ENCODE measurements at regions of chr3 and their contacts with region 1.

Region 1: DNA sequence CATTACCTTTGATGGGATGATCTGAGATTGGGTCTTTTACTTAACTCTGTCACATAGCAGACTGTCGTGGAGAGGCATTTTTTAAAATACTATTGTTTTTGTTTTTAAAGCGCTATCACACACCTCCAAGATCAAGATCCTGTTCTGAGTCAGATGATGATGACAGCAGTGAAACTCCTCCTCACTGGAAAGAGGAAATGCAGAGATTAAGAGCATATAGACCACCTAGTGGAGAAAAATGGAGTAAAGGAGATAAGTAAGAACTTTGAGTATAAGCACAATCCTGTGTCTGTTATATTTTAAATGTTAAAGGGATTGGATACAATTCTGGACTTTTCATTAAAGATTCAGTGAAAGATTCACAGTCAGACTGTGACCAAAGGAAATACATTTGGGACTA is 18.4 kb upstream of the ZBTB47 start:
- DNase-seq: no peak
- ATAC-seq: peak; percentile 68
- H3K4me3 Mint-ChIP-seq: no peak overlapping the region
- H3K27ac Mint-ChIP-seq: no peak overlapping the region
- H3K4me1 Mint-ChIP-seq: peaks cover 5% of the 10 kb centered on the region
- H3K27me3 Mint-ChIP-seq: no peaks in the 10 kb centered on the region
- CTCF ChIP-seq: no peak

Region 2: DNA sequence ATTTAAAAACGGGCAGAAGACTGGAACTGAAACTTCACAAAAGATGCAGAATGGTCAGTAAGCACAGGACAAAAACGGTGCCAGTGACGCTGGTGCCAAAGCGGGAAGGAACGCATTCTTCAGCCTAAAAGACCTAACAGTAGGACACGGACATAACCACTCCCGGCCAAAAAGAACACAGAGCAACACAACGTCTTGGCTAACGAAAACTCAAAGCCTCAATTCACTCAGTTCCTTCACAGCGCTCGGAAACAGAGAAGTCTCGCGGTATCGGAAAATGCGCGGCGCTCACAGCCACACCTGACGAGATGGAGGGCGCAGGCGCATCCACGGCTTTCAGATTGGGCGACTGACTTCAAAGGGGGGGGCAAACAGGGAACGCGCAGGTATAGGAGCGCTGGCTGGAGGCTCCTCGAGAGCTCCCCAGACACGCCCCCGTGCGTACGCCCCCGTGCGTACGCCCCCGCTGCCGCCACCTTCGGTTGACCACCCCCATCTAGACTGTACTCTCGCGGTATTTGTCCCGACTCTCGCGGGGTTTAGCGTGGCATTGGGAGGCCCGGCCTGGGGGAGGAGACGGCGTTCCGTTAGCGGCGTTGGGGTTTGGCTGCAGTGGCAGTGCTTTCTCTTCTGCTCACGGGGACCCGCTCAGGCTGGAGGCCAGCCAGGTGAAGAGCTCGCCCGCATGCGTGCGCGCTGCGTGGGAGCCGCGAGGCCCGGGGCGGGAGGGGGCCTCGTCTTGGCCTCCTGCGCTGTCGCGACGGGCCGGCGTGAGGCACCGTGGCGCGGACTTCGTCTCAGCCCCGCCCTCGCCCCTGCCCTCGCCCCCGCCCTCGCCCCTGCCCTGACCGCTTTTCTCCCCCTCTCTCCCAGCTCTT is 34.8 kb before region 1 on chr3 and contains the start of gene NKTR:
- CTCF ChIA-PET with region 1: interaction called, 18 read pairs
- POLR2A ChIA-PET with region 1: interaction called, 18 read pairs
- intact Hi-C with region 1: loop called (anchors 5 kb)
- DNase-seq: peak; percentile 99
- ATAC-seq: peak; percentile 88
- H3K4me3 Mint-ChIP-seq: peak within 1 kb of the TSS; percentile 88
- H3K27ac Mint-ChIP-seq: peak within 1 kb of the TSS; percentile 99
- H3K4me1 Mint-ChIP-seq: peaks cover 28% of the 10 kb centered on the region
- H3K27me3 Mint-ChIP-seq: no peaks in the 10 kb centered on the region
- CTCF ChIP-seq: no peak
- total RNA-seq, gene NKTR: 63.4 to 65.9 TPM

Region 3: GRCh38 chr3:42613462-42613861 is 21.6 kb before region 1 on chr3:
- CTCF ChIA-PET with region 1: interaction called, 10 read pairs
- POLR2A ChIA-PET with region 1: interaction called, 3 read pairs
- intact Hi-C with region 1: no loop called
- DNase-seq: no peak
- ATAC-seq: no peak
- H3K4me3 Mint-ChIP-seq: no peak overlapping the region
- H3K27ac Mint-ChIP-seq: peak overlapping the region; percentile 8
- H3K4me1 Mint-ChIP-seq: peaks cover 55% of the 10 kb centered on the region
- H3K27me3 Mint-ChIP-seq: no peaks in the 10 kb centered on the region
- CTCF ChIP-seq: peak; percentile 30

Region 4: GRCh38 chr3:42660893-42661292 is 25.8 kb after region 1 on chr3:
- CTCF ChIA-PET with region 1: no interaction called
- POLR2A ChIA-PET with region 1: no interaction called
- intact Hi-C with region 1: no loop called
- DNase-seq: peak; percentile 34
- ATAC-seq: peak; percentile 60
- H3K4me3 Mint-ChIP-seq: no peak overlapping the region
- H3K27ac Mint-ChIP-seq: no peak overlapping the region
- H3K4me1 Mint-ChIP-seq: no peaks in the 10 kb centered on the region
- H3K27me3 Mint-ChIP-seq: no peaks in the 10 kb centered on the region
- CTCF ChIP-seq: peak; percentile 21

Region 5: GRCh38 chr3:42685891-42686820 is 51.0 kb after region 1 on chr3:
- CTCF ChIA-PET with region 1: no interaction called
- POLR2A ChIA-PET with region 1: no interaction called
- intact Hi-C with region 1: no loop called
- DNase-seq: no peak
- ATAC-seq: no peak
- H3K4me3 Mint-ChIP-seq: no peak overlapping the region
- H3K27ac Mint-ChIP-seq: no peak overlapping the region
- H3K4me1 Mint-ChIP-seq: no peaks in the 10 kb centered on the region
- H3K27me3 Mint-ChIP-seq: peaks cover 9% of the 10 kb centered on the region
- CTCF ChIP-seq: no peak

Region 6: GRCh38 chr3:42698911-42699230 is 63.8 kb after region 1 on chr3:
- CTCF ChIA-PET with region 1: no interaction called
- POLR2A ChIA-PET with region 1: no interaction called
- intact Hi-C with region 1: no loop called
- DNase-seq: peak; percentile 54
- ATAC-seq: peak; percentile 56
- H3K4me3 Mint-ChIP-seq: no peak overlapping the region
- H3K27ac Mint-ChIP-seq: no peak overlapping the region
- H3K4me1 Mint-ChIP-seq: peaks cover 2% of the 10 kb centered on the region
- H3K27me3 Mint-ChIP-seq: peaks cover 2% of the 10 kb centered on the region
- CTCF ChIP-seq: no peak

Region 7: DNA sequence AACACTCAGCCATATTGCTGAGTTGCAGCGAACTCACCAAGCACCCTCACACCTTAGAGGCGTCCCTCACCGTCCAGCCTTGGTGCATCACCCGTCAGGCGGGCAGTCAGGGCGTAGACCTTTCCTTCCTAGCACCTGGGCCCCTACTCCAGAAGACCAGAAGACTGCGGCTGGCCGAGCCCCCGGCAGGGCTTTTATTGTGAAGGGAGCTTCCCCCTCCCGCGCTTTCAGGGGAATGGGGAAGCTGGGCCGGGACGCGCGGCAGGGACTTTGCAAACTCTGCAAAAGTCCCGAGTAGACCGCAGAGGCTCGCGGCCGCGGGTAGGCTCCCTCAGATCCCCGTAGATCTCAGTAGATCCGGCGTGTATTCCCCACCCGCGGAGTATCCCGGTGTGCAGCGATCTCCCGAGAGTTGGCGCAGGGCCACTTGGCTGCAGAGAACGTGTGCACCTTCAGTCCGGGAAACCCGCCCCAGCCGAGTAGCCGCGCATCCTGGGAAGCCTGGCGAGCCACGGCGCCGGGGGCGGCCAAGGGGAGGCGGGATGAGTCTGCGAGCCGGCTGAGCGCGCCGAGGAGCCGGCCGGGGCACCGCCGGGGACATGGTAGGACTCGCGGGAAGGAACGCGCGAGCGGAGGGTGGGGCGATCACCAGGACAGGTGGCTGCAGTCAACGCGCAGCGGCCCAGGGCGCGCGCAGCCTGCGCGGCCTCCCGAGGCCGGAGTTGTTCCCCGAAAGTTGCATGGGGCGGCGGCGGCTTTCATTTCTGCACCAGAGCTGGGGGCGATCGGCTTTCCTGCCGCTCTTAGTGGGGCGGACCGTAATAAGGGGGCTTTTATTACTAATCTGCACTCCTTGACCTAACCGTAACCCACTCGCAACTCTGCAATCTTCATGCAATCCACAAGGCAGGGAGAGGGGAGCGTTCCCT is 344.2 kb after region 1 on chr3 and contains the start of gene GASK1A:
- CTCF ChIA-PET with region 1: no interaction called
- POLR2A ChIA-PET with region 1: no interaction called
- intact Hi-C with region 1: no loop called
- DNase-seq: peak; percentile 40
- ATAC-seq: peak; percentile 65
- H3K4me3 Mint-ChIP-seq: peak within 1 kb of the TSS; percentile 64
- H3K27ac Mint-ChIP-seq: no peak within 1 kb of the TSS
- H3K4me1 Mint-ChIP-seq: peaks cover 4% of the 10 kb centered on the region
- H3K27me3 Mint-ChIP-seq: peaks cover 24% of the 10 kb centered on the region
- CTCF ChIP-seq: no peak
- total RNA-seq, gene GASK1A: 0.11 TPM in 1 of 2 experiments, not detected in the other